ENCODE measurements at regions of chr16 and their contacts with region 1.

Region 1: GRCh38 chr16:75265845-75266701 is 14.6 kb upstream of the BCAR1 start:
- DNase-seq: no peak

Region 2: DNA sequence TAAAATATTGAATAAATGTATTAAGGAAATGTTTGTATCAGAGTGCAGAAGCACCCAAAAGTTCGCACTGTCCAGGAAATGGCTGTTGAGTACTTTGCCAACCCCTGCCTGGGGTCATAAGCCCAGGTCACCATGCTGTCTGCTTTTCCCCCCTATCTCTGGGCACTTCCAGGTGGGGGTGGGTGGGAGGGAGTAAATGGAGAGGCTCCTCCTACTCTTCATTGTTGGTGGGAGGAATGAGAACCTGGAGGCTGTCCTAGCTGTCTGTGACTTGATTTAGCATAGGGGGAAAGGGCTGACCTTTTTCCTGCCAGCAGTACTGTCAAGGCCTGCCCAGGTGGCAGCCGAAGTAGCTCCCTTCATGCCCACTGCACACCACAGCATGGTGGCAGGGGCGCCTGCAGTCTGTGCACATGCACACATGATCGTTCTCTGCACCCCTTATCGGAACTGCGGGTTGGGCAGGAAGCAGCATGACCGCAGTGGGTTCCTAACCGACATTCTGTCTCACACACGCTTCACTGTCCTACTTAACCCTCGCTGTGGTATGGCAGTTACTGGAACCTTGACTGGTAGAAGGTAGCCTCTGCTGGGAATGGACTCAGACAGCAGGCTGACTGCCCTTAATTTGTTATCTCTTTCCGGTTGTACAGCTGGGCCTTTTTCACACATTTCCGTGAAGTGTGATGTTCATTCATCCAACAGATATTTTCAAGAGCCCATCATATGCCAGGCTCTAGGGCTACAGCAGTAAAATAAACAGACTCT is 191.0 kb before region 1 on chr16:
- intact Hi-C with region 1: no loop called
- DNase-seq: no peak

Region 3: DNA sequence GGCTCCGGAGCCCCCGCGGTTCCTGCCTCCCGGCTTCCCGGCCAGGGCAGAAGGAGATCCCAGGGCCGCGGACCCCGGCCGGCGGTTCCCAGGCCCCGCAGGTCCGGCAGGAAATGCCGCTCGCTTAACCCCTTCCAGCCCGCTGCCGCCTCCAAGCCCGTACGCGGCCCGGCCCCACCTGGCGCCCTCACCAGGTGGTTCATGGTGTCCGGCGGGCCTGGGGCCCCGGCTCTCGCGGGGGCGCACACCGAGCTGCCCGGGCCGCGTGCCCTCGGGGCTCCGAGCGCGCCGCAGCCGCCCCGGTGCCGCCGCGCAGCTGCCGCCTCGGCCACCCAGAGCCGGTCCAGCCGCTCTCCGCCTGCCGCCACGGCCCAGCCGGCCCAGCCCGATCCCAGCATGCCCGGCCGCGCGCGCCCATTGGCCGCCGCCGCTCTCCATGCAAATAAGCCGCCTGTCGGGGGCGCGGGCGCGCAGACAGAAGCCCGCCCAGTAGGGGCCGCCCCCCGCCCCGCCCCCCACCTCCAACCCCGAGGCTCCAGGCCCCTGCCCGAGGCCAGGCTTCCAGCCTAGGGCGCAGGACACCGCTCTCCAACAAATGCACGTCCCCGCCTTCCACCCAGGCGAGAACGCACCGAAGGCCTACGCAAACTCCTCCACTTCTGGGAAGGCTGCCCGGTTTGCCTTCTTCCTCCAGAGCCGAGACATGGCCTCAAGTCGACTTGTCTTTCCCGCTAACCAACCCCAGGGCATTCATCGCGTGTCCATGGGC is 14.6 kb before region 1 on chr16 and contains the start of gene BCAR1:
- intact Hi-C with region 1: loop called (anchors 2 kb)
- DNase-seq: peak; percentile 91
- total RNA-seq, gene BCAR1: 80.3 TPM

Region 4: GRCh38 chr16:75305364-75306098 is 39.5 kb after region 1 on chr16:
- intact Hi-C with region 1: loop called (anchors 2 kb)
- DNase-seq: peak; percentile 80